Esophagus squamous epithelium (tissue), 5 donors: ENCODE measurements at regions of chr18 and their contacts with region 1.

Region 1: GRCh38 chr18:63741769-63742168 is 33.4 kb upstream of the SERPINB7 start:
- DNase-seq: no peak
- H3K4me3 ChIP-seq: no peak overlapping the region
- H3K27ac ChIP-seq: no peak overlapping the region
- H3K4me1 ChIP-seq: peaks cover 0 to 15% (median 0%) of the 10 kb centered on the region in 3 donors
- H3K27me3 ChIP-seq: no peaks in the 10 kb centered on the region
- CTCF ChIP-seq: peak in 4 of 6 experiments; percentile 46 to 82 (median 56)
- POLR2A ChIP-seq: no peak

Region 2: GRCh38 chr18:63518178-63519012 is 223.4 kb before region 1 on chr18:
- intact Hi-C with region 1: loop called (anchors 10 kb)
- DNase-seq: no peak
- H3K4me3 ChIP-seq: no peak overlapping the region
- H3K27ac ChIP-seq: no peak overlapping the region
- H3K4me1 ChIP-seq: peaks cover 0 to 30% (median 0%) of the 10 kb centered on the region in 3 donors
- H3K27me3 ChIP-seq: no peaks in the 10 kb centered on the region
- CTCF ChIP-seq: peak; percentile 53 to 92 (median 82)
- POLR2A ChIP-seq: no peak

Region 3: DNA sequence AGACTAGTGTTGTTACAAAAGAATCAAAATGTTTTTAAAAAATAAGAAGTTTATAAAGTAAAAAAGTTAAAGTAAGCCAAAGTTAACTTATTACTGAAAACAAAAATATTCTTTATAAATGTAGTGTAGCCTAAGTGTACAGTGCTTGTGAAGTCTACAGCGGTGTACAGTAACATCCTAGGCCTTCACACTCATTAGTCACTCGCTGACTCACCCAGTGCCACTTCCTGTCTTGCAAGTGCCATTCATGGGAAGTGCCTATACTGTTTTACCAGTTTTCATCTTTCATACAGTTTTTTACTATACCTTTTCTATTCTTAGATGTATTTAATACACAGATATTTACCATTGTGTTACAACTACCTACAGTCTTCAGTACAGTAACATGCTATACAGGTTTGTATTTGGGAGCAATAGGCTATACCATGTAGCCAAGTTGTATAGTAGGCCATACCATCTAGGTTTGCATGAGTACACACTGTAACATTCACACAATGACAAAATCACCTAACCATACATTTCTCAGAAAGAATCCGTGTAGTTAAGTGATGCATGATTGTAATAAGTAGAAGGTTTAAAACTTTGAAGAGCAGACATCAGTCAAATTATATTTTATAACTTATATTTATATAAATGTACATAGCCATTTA is 46.8 kb after region 1 on chr18:
- intact Hi-C with region 1: no loop called
- DNase-seq: no peak
- H3K4me3 ChIP-seq: no peak overlapping the region
- H3K27ac ChIP-seq: peak overlapping the region in 1 of 4 donors; percentile 30
- H3K4me1 ChIP-seq: peaks cover 0 to 5% (median 4%) of the 10 kb centered on the region in 3 donors
- H3K27me3 ChIP-seq: no peaks in the 10 kb centered on the region
- CTCF ChIP-seq: no peak
- POLR2A ChIP-seq: no peak